ENCODE measurements at regions of chr2 and their contacts with region 1.

Region 1: DNA sequence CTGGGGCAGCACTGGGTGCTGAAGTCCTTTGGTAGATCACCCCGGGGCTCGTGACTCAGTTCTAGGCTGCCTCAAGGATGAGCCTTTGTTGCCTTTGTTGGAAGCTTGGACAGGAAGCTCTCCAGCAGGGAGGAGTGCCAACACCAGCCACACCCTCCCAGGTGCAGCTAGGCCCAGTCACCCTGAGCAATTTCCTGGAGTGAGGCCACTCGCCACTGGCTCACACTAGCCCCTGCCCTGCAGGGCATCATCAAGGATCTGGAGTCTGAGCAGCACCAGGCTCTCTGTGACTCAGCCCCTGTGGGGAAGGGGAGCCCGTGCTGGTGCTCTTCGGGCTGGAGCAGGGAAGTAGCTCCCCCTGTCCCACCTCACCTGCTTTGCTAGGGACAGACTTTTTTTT is 6.7 kb upstream of the SDC1 start:
- DNase-seq: peak in 2 of 3 donors; percentile 51 to 60
- ATAC-seq: peak; percentile 53 to 91 (median 64)
- H3K4me3 ChIP-seq: no peak overlapping the region
- H3K27ac ChIP-seq: no peak overlapping the region
- H3K4me1 ChIP-seq: peaks cover 0 to under 1% (median 0%) of the 10 kb centered on the region in 4 donors
- H3K27me3 ChIP-seq: no peaks in the 10 kb centered on the region
- CTCF ChIP-seq: no peak
- POLR2A ChIP-seq: no peak

Region 2: GRCh38 chr2:20097879-20098714 is 133.5 kb before region 1 on chr2:
- intact Hi-C with region 1: no loop called
- DNase-seq: peak; percentile 80 to 82 (median 82)
- ATAC-seq: peak; percentile 83 to 86 (median 86)
- H3K4me3 ChIP-seq: no peak overlapping the region
- H3K27ac ChIP-seq: no peak overlapping the region
- H3K4me1 ChIP-seq: peaks cover 0 to 31% (median 9%) of the 10 kb centered on the region in 4 donors
- H3K27me3 ChIP-seq: no peaks in the 10 kb centered on the region
- CTCF ChIP-seq: peak; percentile 83 to 94 (median 90)
- POLR2A ChIP-seq: no peak

Region 3: DNA sequence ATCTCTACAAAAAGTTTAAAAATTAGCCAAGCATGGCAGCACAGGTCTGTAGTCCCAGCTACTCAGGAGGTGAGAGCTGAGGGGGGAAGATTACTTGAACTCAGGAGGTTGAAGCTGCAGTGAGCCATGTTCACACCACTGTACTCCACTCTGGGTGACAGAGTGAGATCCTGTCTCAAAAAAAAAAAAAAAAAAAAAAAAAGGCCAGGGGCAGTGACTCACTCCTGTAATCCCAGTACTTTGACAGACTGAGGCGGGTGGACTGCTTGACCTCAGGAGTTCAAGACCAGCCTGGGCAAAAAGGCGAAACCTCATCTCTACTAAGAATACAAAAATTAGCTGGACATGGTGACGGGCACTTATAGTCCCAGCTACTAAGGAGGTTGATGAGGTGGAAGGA is 82.0 kb after region 1 on chr2:
- intact Hi-C with region 1: loop called in 1 of 2 experiments (anchors 10 kb)
- DNase-seq: no peak
- ATAC-seq: no peak
- H3K4me3 ChIP-seq: no peak overlapping the region
- H3K27ac ChIP-seq: no peak overlapping the region
- H3K4me1 ChIP-seq: no peaks in the 10 kb centered on the region
- H3K27me3 ChIP-seq: no peaks in the 10 kb centered on the region
- CTCF ChIP-seq: no peak
- POLR2A ChIP-seq: no peak